ENCODE measurements at regions of chr19 and their contacts with region 1.

Region 1: GRCh38 chr19:48627211-48627938 is 8.1 kb downstream of the SPHK2 start:
- DNase-seq: peak; percentile 72
- ATAC-seq: no peak
- H3K4me3 Mint-ChIP-seq: no peak overlapping the region
- H3K27ac Mint-ChIP-seq: peak overlapping the region; percentile 74
- H3K4me1 Mint-ChIP-seq: peaks cover 45% of the 10 kb centered on the region
- H3K27me3 Mint-ChIP-seq: no peaks in the 10 kb centered on the region

Region 2: GRCh38 chr19:48553676-48554386 is 73.5 kb before region 1 on chr19:
- CTCF ChIA-PET with region 1: no interaction called
- DNase-seq: no peak
- ATAC-seq: no peak
- H3K4me3 Mint-ChIP-seq: no peak overlapping the region
- H3K27ac Mint-ChIP-seq: no peak overlapping the region
- H3K4me1 Mint-ChIP-seq: no peaks in the 10 kb centered on the region
- H3K27me3 Mint-ChIP-seq: peaks cover 12% of the 10 kb centered on the region

Region 3: DNA sequence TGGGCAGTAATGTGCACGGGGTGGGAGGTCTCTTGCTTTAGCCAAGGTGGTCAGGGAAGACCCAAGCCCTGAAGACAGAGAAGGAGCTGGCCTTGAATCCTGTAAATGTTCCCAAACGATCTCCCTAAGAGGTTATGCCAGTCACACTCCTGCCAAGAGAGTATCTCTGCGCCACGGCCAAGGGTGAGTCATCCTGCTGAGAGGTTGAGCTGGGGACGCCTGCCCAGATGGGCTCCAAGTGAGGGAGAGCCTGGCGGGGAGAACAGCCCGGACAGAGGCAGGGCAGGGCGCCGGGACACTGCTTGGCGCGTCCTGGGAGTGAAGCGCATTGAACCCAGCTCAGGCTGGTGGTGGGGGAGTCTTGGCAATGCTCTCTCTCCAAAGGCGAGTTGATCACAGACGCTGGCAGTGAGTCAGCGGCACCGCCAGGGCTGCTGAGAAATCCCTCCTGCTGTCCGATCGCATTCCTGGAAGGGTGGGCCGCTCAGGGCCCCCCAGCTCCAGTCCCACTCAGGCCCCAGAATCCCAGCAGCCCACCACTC is 59.0 kb before region 1 on chr19:
- CTCF ChIA-PET with region 1: no interaction called
- DNase-seq: no peak
- ATAC-seq: no peak
- H3K4me3 Mint-ChIP-seq: no peak overlapping the region
- H3K27ac Mint-ChIP-seq: no peak overlapping the region
- H3K4me1 Mint-ChIP-seq: no peaks in the 10 kb centered on the region
- H3K27me3 Mint-ChIP-seq: peaks cover 8% of the 10 kb centered on the region

Region 4: GRCh38 chr19:48646001-48646721 is 18.8 kb after region 1 on chr19 and contains the start of gene CA11:
- CTCF ChIA-PET with region 1: interaction called, 10 read pairs
- DNase-seq: peak; percentile 94
- ATAC-seq: peak; percentile 90
- H3K4me3 Mint-ChIP-seq: peak within 1 kb of the TSS; percentile 74
- H3K27ac Mint-ChIP-seq: peak within 1 kb of the TSS; percentile 77
- H3K4me1 Mint-ChIP-seq: peaks cover 33% of the 10 kb centered on the region
- H3K27me3 Mint-ChIP-seq: peaks cover 2% of the 10 kb centered on the region
- total RNA-seq, gene CA11: 6.0 to 7.2 TPM

Region 5: DNA sequence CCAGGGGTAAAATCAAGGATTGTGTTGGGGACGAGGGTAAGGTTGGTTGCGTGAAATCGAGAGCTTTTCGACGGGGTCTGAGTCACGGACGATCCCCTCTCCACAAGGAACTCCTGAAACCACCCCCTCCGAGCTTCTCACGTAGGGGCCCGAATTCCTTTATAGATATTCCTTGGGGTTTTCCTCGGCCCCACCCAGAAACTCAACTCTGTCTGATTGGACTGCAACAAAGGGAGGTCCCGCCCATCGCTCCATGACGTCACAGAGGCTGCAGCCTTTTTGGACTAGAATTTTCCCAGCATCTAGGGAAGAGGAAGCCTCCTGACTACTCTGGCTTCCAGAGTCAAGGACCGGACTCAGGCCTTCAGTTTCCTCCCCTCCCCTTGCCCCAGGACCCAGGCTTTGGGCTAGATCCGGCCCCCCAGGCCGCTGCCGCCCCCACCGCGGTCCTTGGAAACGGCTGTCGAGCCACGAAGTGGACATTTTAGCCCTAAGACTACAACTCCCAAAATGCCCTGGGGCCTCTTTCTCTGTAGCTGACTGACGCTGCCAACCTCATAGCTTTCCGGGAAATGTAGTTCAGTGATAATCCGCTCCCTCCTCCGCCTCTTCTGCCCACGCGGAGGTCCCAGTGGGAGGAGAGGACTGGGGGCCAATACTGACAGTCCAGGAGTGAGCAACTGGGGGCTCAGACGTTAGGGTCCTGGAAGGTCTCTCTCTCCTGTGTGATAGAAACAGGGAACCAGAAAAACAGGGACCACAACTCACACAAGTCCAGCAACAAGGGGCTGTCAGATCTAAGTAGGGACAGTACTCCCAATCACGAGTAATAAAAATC is 119.6 kb after region 1 on chr19 and contains the start of gene IZUMO1:
- CTCF ChIA-PET with region 1: no interaction called
- DNase-seq: peak; percentile 72
- ATAC-seq: peak; percentile 79
- H3K4me3 Mint-ChIP-seq: peak within 1 kb of the TSS; percentile 22
- H3K27ac Mint-ChIP-seq: no peak within 1 kb of the TSS
- H3K4me1 Mint-ChIP-seq: peaks cover 9% of the 10 kb centered on the region
- H3K27me3 Mint-ChIP-seq: peaks cover 19% of the 10 kb centered on the region
- total RNA-seq, gene IZUMO1: not detected

Measured in activated CD8-positive, alpha-beta memory T cell treated with anti-CD3 and anti-CD28 coated beads, Interleukin-2, amount 10 ng/mL, durations not matched to agents 7 days and 5 days (primary cell).